Activated CD4-positive, alpha-beta memory T cell treated with anti-CD3 and anti-CD28 coated beads for 36 hours (primary cell): ENCODE measurements at regions of chr6 and their contacts with region 1.

Region 1: DNA sequence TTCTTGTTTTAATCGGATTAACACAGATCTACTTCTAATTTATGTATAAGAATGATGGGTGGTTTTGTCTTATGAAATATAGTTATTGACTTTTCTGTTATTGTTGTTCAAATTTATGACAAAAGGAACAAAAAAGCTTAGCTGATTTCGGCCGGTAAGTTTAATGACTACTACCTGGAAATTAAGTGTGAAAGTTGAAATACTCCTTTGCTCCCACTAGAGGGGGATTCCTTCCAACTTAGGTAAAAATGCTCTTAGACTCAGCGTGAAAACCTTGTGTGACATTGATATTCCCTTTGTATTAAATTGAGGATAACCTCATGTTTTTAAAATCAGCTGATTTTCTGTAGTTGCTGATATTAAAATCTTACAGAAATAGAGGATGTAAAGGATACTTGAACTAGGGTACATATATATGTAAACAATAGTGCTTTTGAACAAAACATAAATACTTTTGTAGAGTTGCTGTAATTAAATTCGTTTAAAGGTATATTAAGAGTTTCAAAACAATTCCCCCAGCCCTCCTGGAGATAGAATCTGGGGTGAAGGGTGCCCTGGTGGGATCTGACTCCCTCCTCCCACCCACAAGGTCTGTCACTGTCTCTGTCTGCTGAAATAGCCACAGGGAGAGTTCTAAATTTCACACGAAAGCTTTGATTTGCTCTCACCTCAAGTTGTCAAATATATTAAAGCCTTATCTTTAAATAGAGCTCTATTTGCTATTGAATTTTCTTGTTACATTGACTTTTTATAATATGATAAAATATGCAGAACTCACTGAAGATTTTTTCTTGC is 257.5 kb downstream of the ARID1B start:
- DNase-seq: no peak
- H3K4me3 Mint-ChIP-seq: peak overlapping the region; percentile 55
- H3K27ac Mint-ChIP-seq: no peak overlapping the region
- H3K4me1 Mint-ChIP-seq: peaks cover 26% of the 10 kb centered on the region
- H3K27me3 Mint-ChIP-seq: no peaks in the 10 kb centered on the region

Region 2: DNA sequence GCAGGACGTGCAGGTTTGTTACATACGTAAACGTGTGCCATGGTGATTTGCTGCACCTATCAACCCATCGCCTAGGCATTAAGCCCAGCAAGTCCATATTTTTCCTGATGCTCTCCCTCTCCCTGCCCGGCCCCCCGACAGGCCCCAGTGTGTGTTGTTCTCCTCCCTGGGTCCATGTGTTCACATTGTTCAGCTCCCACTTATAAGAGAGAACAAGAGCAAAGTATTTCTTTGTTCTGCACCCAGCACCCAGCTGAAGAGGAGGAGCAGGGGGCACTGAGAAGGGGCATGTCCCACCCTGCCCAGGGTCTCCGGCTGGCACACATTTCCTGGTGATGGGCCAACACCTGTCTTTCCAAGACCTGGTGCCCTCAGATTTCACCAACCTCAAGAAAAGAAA is 508.6 kb before region 1 on chr6:
- CTCF ChIA-PET with region 1: no interaction called
- POLR2A ChIA-PET with region 1: no interaction called
- intact Hi-C with region 1: no loop called
- DNase-seq: no peak
- H3K4me3 Mint-ChIP-seq: no peak overlapping the region
- H3K27ac Mint-ChIP-seq: no peak overlapping the region
- H3K4me1 Mint-ChIP-seq: no peaks in the 10 kb centered on the region
- H3K27me3 Mint-ChIP-seq: no peaks in the 10 kb centered on the region

Region 3: DNA sequence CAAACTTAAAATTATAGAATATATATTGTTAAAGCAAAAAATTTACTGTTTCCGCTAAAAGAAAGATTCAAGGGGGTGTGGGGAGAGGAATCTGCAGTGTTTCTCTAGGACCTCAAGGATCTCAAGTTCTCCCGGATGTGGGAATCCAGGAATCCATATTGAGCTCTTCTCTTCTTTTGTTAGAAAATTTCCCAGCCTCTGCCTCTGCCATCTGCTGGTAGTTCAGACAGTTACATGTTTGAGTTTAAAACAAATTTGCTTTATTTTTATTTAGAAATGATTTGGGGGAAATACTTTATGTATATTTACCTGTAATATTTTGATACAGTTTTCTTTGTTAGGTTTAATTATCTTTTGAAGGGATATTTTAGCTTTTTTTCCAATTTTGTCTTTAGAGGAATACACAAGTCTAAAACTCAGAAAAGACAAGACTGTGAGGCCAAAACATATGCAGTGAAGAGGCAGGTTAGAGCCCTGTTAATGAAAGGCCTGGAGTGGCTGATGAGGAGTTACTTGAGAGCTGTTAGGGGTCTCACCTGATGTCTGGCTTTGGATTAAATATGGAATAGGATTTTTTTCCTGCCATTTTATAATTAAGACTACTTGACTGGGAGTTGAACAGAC is 11.3 kb after region 1 on chr6:
- CTCF ChIA-PET with region 1: interaction called, 37 read pairs
- POLR2A ChIA-PET with region 1: no interaction called
- intact Hi-C with region 1: no loop called
- DNase-seq: no peak
- H3K4me3 Mint-ChIP-seq: no peak overlapping the region
- H3K27ac Mint-ChIP-seq: no peak overlapping the region
- H3K4me1 Mint-ChIP-seq: peaks cover 7% of the 10 kb centered on the region
- H3K27me3 Mint-ChIP-seq: no peaks in the 10 kb centered on the region

Region 4: DNA sequence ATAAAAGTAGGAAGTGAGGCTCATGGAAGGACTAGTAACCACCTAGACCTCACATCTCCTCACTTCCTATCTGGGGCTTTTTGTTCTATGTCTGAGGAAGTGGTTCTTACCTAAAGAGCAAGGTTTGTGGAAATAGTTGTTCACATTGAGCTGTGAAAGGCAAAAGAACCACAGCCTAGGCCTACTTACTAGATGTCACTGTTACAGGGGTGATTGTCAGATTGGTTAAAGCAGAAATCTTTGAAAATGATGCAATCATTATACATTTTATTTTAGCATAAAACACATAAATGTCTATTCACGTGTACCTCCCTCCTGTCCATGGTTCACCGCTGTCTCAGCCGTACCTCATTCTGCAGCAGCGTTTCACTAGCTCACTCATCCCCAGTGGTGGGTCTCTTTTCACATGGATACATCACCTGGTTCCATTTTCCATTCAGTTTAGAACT is 19.9 kb after region 1 on chr6:
- CTCF ChIA-PET with region 1: interaction called, 9 read pairs
- POLR2A ChIA-PET with region 1: no interaction called
- intact Hi-C with region 1: loop called (anchors 1 kb)
- DNase-seq: peak; percentile 59
- H3K4me3 Mint-ChIP-seq: no peak overlapping the region
- H3K27ac Mint-ChIP-seq: peak overlapping the region; percentile 91
- H3K4me1 Mint-ChIP-seq: peaks cover 39% of the 10 kb centered on the region
- H3K27me3 Mint-ChIP-seq: no peaks in the 10 kb centered on the region

Region 5: DNA sequence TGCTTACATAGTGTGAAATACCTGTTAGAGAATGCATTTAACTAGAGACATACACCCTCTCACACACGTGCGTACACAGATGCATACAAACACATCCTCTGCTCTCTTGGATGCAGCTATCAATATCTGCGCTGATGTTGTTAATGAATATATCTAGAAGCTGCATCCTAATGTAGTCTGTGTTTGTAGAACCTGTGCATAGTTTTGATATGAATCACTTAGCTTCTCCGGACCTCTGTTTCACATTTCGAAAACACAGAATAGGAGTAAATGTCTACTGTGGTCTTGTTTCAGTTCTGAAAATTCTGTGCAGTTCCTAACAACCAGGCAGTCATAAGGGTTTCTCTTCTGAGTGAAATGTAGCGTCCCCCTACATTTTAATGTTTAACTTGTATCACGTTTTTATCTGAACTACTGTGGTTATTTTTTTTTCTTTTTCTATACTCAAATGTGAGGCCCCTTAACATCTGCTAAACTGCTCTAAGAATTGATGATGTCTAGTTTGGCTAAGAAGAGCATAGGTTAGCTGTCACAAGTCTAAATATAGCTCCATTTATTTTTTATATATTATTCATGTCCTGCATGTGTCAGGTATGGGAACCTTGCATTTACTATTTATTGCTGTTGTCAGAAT is 34.2 kb after region 1 on chr6:
- CTCF ChIA-PET with region 1: interaction called, 7 read pairs
- POLR2A ChIA-PET with region 1: no interaction called
- intact Hi-C with region 1: loop called (anchors 5 kb)
- DNase-seq: no peak
- H3K4me3 Mint-ChIP-seq: peak overlapping the region; percentile 18
- H3K27ac Mint-ChIP-seq: peak overlapping the region; percentile 49
- H3K4me1 Mint-ChIP-seq: peaks cover 47% of the 10 kb centered on the region
- H3K27me3 Mint-ChIP-seq: no peaks in the 10 kb centered on the region

Region 6: GRCh38 chr6:157184202-157185020 is 149.8 kb after region 1 on chr6:
- CTCF ChIA-PET with region 1: interaction called, 38 read pairs
- POLR2A ChIA-PET with region 1: no interaction called
- intact Hi-C with region 1: loop called (anchors 1 kb)
- DNase-seq: peak; percentile 75
- H3K4me3 Mint-ChIP-seq: peak overlapping the region; percentile 43
- H3K27ac Mint-ChIP-seq: peak overlapping the region; percentile 62
- H3K4me1 Mint-ChIP-seq: peaks cover 13% of the 10 kb centered on the region
- H3K27me3 Mint-ChIP-seq: no peaks in the 10 kb centered on the region